B cell (primary cell): ENCODE measurements at regions of chr4 and their contacts with region 1.

Region 1: GRCh38 chr4:128675083-128675482 is 134.4 kb upstream of the JADE1 start:
- DNase-seq: peak; percentile 45
- ATAC-seq: peak; percentile 71
- H3K4me3 ChIP-seq: peak overlapping the region in 1 of 5 experiments; percentile 4
- H3K4me3 Mint-ChIP-seq: peak overlapping the region; percentile 63
- H3K27ac ChIP-seq: peak overlapping the region; percentile 57 to 79
- H3K27ac Mint-ChIP-seq: peak overlapping the region; percentile 81
- H3K4me1 ChIP-seq: peaks cover 12 to 19% of the 10 kb centered on the region in 2 donors
- H3K4me1 Mint-ChIP-seq: peaks cover 24% of the 10 kb centered on the region
- H3K27me3 ChIP-seq: no peaks in the 10 kb centered on the region
- H3K27me3 Mint-ChIP-seq: no peaks in the 10 kb centered on the region
- CTCF ChIP-seq: no peak

Region 2: DNA sequence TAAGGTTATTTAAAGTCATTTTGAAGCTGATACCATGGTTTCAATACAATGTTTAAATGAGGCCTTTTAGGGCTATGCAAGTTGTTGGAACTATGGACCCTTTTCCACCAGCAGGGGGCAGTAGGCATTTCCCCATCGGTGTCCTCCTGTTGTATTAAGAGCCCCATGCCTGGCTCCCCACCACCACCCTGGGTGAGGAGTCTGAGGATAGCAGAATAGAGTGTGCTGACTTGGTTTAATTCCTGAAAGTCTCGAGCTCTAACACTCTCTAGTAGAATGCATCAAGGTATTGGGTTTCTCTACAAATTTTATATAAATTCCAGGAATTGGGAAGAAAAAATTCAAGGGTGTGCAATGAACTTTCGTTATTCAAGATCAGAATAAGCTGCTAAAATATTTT is 100.4 kb before region 1 on chr4:
- CTCF ChIA-PET with region 1: no interaction called
- POLR2A ChIA-PET with region 1: interaction called, 3 read pairs
- intact Hi-C with region 1: loop called (anchors 1 kb)
- DNase-seq: peak; percentile 67
- ATAC-seq: no peak
- H3K4me3 ChIP-seq: no peak overlapping the region
- H3K4me3 Mint-ChIP-seq: no peak overlapping the region
- H3K27ac ChIP-seq: no peak overlapping the region
- H3K27ac Mint-ChIP-seq: no peak overlapping the region
- H3K4me1 ChIP-seq: no peaks in the 10 kb centered on the region
- H3K4me1 Mint-ChIP-seq: no peaks in the 10 kb centered on the region
- H3K27me3 ChIP-seq: no peaks in the 10 kb centered on the region
- H3K27me3 Mint-ChIP-seq: peaks cover 14% of the 10 kb centered on the region
- CTCF ChIP-seq: peak; percentile 70

Region 3: DNA sequence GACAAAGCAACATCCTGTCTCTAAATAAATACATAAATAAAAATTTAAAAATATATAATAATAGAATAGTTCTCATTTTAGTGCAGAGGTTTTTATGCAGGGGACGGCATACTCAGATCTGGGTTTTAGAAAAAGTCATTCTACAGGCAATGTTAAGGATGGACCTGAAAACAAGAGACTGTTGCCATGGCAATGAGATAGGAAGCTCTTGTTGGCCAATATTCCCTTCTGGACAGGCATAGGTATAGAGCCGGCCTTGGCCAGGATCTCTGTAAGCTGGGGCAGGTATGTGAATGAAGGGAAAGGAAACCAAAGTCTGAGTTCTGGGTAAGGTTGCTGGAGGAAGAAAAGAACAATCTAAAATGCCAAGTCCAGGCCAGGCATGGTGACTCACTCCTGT is 53.0 kb before region 1 on chr4:
- CTCF ChIA-PET with region 1: no interaction called
- POLR2A ChIA-PET with region 1: no interaction called
- intact Hi-C with region 1: no loop called
- DNase-seq: no peak
- ATAC-seq: no peak
- H3K4me3 ChIP-seq: no peak overlapping the region
- H3K4me3 Mint-ChIP-seq: no peak overlapping the region
- H3K27ac ChIP-seq: no peak overlapping the region
- H3K27ac Mint-ChIP-seq: no peak overlapping the region
- H3K4me1 ChIP-seq: no peaks in the 10 kb centered on the region
- H3K4me1 Mint-ChIP-seq: no peaks in the 10 kb centered on the region
- H3K27me3 ChIP-seq: no peaks in the 10 kb centered on the region
- H3K27me3 Mint-ChIP-seq: peaks cover 3% of the 10 kb centered on the region
- CTCF ChIP-seq: no peak

Region 4: DNA sequence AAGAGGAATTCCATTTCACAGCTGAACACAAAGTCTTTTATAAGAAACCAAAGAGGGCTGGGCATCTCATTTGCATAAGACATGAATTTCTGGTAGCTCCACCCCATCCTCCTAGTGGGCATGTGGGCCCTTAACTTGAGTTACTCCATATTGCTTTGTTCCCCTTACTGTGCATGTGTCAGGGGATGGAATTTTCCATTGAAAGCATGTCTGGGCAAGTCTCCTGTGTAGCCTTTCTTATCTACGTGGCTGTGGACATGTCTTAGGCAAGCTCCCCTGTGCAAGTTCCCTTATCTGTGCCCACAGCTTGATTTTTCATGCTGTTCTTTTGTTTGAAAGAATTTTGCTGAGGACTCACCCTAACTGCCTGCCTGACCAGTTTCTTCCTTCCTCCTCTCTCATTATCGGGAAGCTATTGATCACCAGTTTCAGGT is 11.0 kb after region 1 on chr4:
- CTCF ChIA-PET with region 1: no interaction called
- POLR2A ChIA-PET with region 1: no interaction called
- intact Hi-C with region 1: no loop called
- DNase-seq: no peak
- ATAC-seq: no peak
- H3K4me3 ChIP-seq: no peak overlapping the region
- H3K4me3 Mint-ChIP-seq: no peak overlapping the region
- H3K27ac ChIP-seq: no peak overlapping the region
- H3K27ac Mint-ChIP-seq: no peak overlapping the region
- H3K4me1 ChIP-seq: peaks cover 6 to 15% of the 10 kb centered on the region in 2 donors
- H3K4me1 Mint-ChIP-seq: peaks cover 13% of the 10 kb centered on the region
- H3K27me3 ChIP-seq: no peaks in the 10 kb centered on the region
- H3K27me3 Mint-ChIP-seq: no peaks in the 10 kb centered on the region
- CTCF ChIP-seq: no peak